BJ (cell line): ENCODE measurements at regions of chr17 and their contacts with region 1.

Region 1: DNA sequence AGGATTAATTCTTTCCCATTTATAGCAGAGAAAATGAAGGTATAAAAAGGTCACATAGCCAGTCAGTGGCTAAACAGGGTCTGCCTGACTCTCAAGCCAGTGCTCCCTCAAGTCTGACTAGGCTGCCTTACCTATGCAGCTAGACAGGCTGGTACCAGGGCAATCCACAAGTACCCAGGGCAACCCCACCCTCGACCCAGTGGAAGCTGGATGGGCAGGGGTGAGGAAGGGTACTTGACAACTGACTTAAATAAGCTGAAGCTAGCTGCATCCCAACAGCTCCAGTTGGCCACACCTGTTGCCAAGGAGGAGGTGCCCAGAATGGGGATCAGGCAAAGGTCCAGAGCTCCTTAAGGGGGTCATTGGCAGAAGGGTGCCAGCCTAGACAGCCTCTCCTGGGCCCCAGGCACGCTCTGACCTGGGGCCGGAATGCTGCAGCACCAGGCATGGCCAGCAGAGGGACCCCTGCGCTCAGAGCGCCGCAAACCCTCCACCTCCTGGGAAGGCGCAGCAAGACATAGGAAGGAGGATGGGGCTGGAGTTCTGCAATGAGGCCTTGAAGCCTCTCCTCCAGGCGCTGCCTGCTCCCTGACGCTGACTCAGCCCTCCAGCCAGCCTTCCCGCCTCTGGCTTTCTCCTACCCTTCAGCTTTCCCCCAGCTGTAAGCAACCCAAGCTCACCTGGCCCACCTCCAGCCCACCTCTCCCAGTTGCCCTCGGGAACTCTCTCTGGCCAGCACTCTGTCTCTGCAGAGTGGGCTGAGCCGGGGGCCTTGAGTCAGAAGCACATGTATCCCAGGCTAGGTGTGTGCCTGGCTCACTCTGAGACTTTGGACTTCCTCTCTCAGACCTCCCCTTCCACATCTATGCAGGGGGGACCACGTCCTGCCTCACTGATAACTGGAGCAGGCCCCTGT is 28.8 kb downstream of the MPP2 start:
- DNase-seq: peak; percentile 37
- H3K4me3 ChIP-seq: no peak overlapping the region
- H3K27me3 ChIP-seq: peaks cover 2% of the 10 kb centered on the region
- CTCF ChIP-seq: peak; percentile 99

Region 2: GRCh38 chr17:43846221-43846712 is 32.3 kb before region 1 on chr17:
- CTCF ChIA-PET with region 1: interaction called, 10 read pairs
- POLR2A ChIA-PET with region 1: no interaction called
- DNase-seq: no peak
- H3K4me3 ChIP-seq: no peak overlapping the region
- H3K27me3 ChIP-seq: peaks cover 10% of the 10 kb centered on the region
- CTCF ChIP-seq: peak; percentile 100

Region 3: GRCh38 chr17:43861024-43861621 is 17.4 kb before region 1 on chr17:
- CTCF ChIA-PET with region 1: interaction called, 12 read pairs
- POLR2A ChIA-PET with region 1: no interaction called
- DNase-seq: no peak
- H3K4me3 ChIP-seq: no peak overlapping the region
- H3K27me3 ChIP-seq: peaks cover 34% of the 10 kb centered on the region
- CTCF ChIP-seq: no peak

Region 4: DNA sequence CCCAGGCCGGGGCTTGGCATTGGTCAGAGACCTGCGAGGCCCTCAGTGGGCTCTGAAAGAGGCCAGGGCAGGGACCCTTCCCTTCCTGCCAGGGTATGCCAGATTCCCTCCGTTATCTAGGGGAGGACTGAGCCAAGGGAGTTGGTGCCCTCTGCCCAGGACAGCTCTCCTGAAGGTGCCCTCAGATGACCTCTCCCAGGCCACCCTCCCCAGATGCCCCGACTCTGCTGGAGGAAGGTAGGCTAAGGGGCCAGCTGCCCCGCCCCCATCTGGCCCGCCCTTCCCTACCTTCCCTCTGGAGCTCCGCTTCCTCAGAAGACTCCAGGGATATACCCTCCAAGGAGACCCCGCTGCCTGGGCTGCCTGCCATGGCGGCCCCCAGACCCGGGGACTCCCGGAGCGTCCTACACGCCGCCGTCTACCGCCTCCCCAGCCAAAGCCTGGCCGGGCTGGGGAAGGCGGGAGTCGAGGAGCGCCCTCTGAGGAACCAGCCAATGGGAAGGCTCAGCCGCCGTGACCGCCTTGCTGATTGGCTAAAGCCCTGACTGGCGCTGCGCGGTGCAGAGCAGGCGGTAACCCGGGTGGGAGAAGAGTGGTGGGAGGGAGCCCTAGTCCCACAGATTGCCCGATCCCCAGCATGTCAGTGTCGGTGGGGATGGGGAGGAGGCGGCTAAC is 21.8 kb after region 1 on chr17:
- CTCF ChIA-PET with region 1: interaction called, 59 read pairs
- POLR2A ChIA-PET with region 1: no interaction called
- DNase-seq: no peak
- H3K4me3 ChIP-seq: peak overlapping the region; percentile 27
- H3K27me3 ChIP-seq: no peaks in the 10 kb centered on the region
- CTCF ChIP-seq: no peak

Region 5: GRCh38 chr17:43915559-43915958 is 37.0 kb after region 1 on chr17:
- CTCF ChIA-PET with region 1: interaction called, 40 read pairs
- POLR2A ChIA-PET with region 1: no interaction called
- DNase-seq: no peak
- H3K4me3 ChIP-seq: no peak overlapping the region
- H3K27me3 ChIP-seq: peaks cover 14% of the 10 kb centered on the region
- CTCF ChIP-seq: no peak

Region 6: DNA sequence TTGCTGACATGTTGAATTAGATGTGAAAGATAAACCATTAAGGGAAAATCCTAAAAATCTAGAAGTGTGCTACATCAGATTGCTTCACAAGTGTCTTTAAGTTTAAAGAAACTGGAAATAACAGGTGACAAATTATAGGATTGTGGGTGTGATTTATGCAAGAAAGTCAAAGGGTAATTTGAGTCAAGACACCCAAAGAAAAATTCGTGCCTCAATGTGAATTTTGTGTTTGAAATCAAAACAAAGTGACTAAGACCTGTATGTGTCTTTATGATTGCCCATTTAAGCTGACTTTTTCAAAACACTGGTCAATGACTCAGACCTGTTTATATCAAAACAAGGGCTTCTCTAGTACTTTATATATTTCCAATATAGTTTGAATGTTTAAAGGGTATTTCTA is 80.4 kb after region 1 on chr17:
- CTCF ChIA-PET with region 1: interaction called, 10 read pairs
- POLR2A ChIA-PET with region 1: no interaction called
- DNase-seq: no peak
- H3K4me3 ChIP-seq: no peak overlapping the region
- H3K27me3 ChIP-seq: peaks cover 15% of the 10 kb centered on the region
- CTCF ChIP-seq: no peak